Activated CD4-positive, alpha-beta T cell treated with anti-CD3 and anti-CD28 coated beads, Interleukin-2, amount 10 ng/mL, durations not matched to agents 24 days and 14 days (primary cell): ENCODE measurements at regions of chr3 and their contacts with region 1.

Region 1: GRCh38 chr3:180679178-180680096 is at the start of gene CCDC39:
- DNase-seq: peak; percentile 88
- H3K4me3 Mint-ChIP-seq: peak within 1 kb of the TSS; percentile 90
- H3K27ac Mint-ChIP-seq: peak within 1 kb of the TSS; percentile 10
- H3K4me1 Mint-ChIP-seq: peaks cover 16% of the 10 kb centered on the region
- H3K27me3 Mint-ChIP-seq: peaks cover 52% of the 10 kb centered on the region
- total RNA-seq, gene CCDC39: not detected in 2 replicates

Region 2: DNA sequence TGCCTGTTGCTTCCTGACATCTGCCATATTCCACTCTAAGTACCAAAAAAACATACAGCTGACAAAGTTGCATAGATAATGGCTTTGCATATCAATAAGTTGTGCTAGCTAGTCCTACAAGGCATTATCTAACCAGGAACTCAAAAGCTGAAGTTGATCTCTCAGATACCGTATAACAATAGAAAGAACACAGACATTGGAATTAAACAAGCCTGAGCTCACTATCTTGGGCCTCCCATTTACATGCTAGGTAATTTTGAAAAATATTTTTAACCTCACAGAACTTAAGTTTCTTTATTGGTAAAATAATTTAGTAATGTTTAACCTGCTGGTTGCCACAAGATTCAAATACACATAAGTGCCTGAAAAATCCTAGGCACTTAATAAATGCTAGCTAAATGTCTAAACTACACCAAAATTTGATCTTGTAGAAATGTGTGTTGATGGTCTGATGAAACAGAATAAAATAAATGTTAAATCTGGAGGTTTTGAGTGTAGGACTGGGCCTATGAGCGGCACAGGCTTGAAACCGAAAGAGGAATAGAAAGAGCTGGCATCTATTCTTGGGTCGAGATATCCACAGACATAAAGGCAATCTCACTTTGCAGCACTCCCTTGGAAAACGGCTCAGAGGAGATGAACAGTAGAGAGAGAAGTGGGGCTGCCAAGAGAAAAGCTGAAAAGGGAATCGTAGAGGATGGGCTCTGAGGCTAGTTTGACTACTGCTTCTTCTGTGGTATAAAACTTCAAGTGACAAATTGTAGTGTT is 107.4 kb before region 1 on chr3:
- intact Hi-C with region 1: no loop called
- DNase-seq: no peak
- H3K4me3 Mint-ChIP-seq: no peak overlapping the region
- H3K27ac Mint-ChIP-seq: no peak overlapping the region
- H3K4me1 Mint-ChIP-seq: no peaks in the 10 kb centered on the region
- H3K27me3 Mint-ChIP-seq: no peaks in the 10 kb centered on the region

Region 3: GRCh38 chr3:180633722-180634121 is 45.7 kb before region 1 on chr3:
- intact Hi-C with region 1: loop called (anchors 5 kb)
- DNase-seq: no peak
- H3K4me3 Mint-ChIP-seq: no peak overlapping the region
- H3K27ac Mint-ChIP-seq: no peak overlapping the region
- H3K4me1 Mint-ChIP-seq: peaks cover 2% of the 10 kb centered on the region
- H3K27me3 Mint-ChIP-seq: peaks cover 10% of the 10 kb centered on the region